CD8-positive, alpha-beta T cell (primary cell): ENCODE measurements at regions of chr4 and their contacts with region 1.

Region 1: GRCh38 chr4:10116580-10117358 is at the start of gene WDR1:
- DNase-seq: peak; percentile 82 to 99 (median 94)
- ATAC-seq: peak; percentile 71
- H3K4me3 ChIP-seq: peak within 1 kb of the TSS; percentile 83 to 91
- H3K4me3 Mint-ChIP-seq: peak within 1 kb of the TSS; percentile 95
- H3K27ac ChIP-seq: peak within 1 kb of the TSS; percentile 96 to 98
- H3K27ac Mint-ChIP-seq: peak within 1 kb of the TSS; percentile 99
- H3K4me1 ChIP-seq: peaks cover 63% of the 10 kb centered on the region
- H3K4me1 Mint-ChIP-seq: peaks cover 74% of the 10 kb centered on the region
- H3K27me3 ChIP-seq: no peaks in the 10 kb centered on the region
- H3K27me3 Mint-ChIP-seq: no peaks in the 10 kb centered on the region
- CTCF ChIP-seq: no peak
- total RNA-seq, gene WDR1: 220 to 224 TPM

Region 2: GRCh38 chr4:9691238-9692065 is 425.3 kb before region 1 on chr4:
- CTCF ChIA-PET with region 1: no interaction called
- POLR2A ChIA-PET with region 1: interaction called, 6 read pairs
- intact Hi-C with region 1: loop called (anchors 1 to 2 kb)
- DNase-seq: peak; percentile 79 to 96 (median 89)
- ATAC-seq: peak; percentile 99
- H3K4me3 ChIP-seq: peak overlapping the region; percentile 72 to 75
- H3K4me3 Mint-ChIP-seq: peak overlapping the region; percentile 88
- H3K27ac ChIP-seq: peak overlapping the region; percentile 55 to 76
- H3K27ac Mint-ChIP-seq: peak overlapping the region; percentile 76
- H3K4me1 ChIP-seq: peaks cover 8% of the 10 kb centered on the region
- H3K4me1 Mint-ChIP-seq: peaks cover 28% of the 10 kb centered on the region
- H3K27me3 ChIP-seq: no peaks in the 10 kb centered on the region
- H3K27me3 Mint-ChIP-seq: no peaks in the 10 kb centered on the region
- CTCF ChIP-seq: no peak

Region 3: DNA sequence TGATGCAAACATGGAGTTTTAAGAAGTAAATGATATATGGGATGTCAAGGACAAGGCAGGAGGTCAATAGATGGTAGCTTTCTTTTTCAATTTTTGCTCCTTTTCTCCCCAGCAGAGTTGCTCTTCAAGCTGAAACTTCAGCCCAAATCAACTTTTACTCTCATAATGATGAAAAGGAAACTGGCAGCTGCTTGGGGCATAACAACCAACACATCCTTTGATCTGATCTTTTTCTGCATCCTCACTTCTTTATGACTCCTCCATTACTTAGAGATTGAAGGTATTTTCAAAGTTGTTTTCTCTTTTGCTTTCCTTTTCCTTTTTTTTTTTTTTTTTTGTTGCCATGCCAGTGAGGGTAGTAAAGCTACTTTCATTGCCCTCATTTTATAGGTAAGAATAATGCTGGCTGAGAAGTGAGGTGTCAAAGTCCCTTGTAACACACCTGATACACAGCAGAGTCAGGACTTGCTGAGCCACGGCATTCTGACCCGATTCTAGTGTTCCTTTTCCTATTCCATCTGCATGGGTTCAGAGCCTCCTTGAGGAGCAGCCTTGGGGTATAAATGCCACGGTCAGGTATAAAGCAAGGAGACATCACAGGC is 122.4 kb before region 1 on chr4:
- CTCF ChIA-PET with region 1: no interaction called
- POLR2A ChIA-PET with region 1: no interaction called
- intact Hi-C with region 1: no loop called
- DNase-seq: peak in 1 of 9 experiments; percentile 22
- ATAC-seq: peak; percentile 42
- H3K4me3 ChIP-seq: no peak overlapping the region
- H3K4me3 Mint-ChIP-seq: no peak overlapping the region
- H3K27ac ChIP-seq: no peak overlapping the region
- H3K27ac Mint-ChIP-seq: peak overlapping the region; percentile 4
- H3K4me1 ChIP-seq: peaks cover 13% of the 10 kb centered on the region
- H3K4me1 Mint-ChIP-seq: peaks cover 9% of the 10 kb centered on the region
- H3K27me3 ChIP-seq: no peaks in the 10 kb centered on the region
- H3K27me3 Mint-ChIP-seq: no peaks in the 10 kb centered on the region
- CTCF ChIP-seq: no peak

Region 4: GRCh38 chr4:10045481-10045880 is 71.3 kb before region 1 on chr4:
- CTCF ChIA-PET with region 1: no interaction called
- POLR2A ChIA-PET with region 1: no interaction called
- intact Hi-C with region 1: no loop called
- DNase-seq: no peak
- ATAC-seq: no peak
- H3K4me3 ChIP-seq: no peak overlapping the region
- H3K4me3 Mint-ChIP-seq: no peak overlapping the region
- H3K27ac ChIP-seq: no peak overlapping the region
- H3K27ac Mint-ChIP-seq: no peak overlapping the region
- H3K4me1 ChIP-seq: peaks cover 5% of the 10 kb centered on the region
- H3K4me1 Mint-ChIP-seq: peaks cover 8% of the 10 kb centered on the region
- H3K27me3 ChIP-seq: no peaks in the 10 kb centered on the region
- H3K27me3 Mint-ChIP-seq: no peaks in the 10 kb centered on the region
- CTCF ChIP-seq: no peak

Region 5: GRCh38 chr4:10079912-10080588 is 36.7 kb before region 1 on chr4:
- CTCF ChIA-PET with region 1: interaction called, 4 read pairs
- POLR2A ChIA-PET with region 1: no interaction called
- intact Hi-C with region 1: loop called (anchors 5 kb)
- DNase-seq: no peak
- ATAC-seq: no peak
- H3K4me3 ChIP-seq: no peak overlapping the region
- H3K4me3 Mint-ChIP-seq: no peak overlapping the region
- H3K27ac ChIP-seq: no peak overlapping the region
- H3K27ac Mint-ChIP-seq: no peak overlapping the region
- H3K4me1 ChIP-seq: no peaks in the 10 kb centered on the region
- H3K4me1 Mint-ChIP-seq: peaks cover 2% of the 10 kb centered on the region
- H3K27me3 ChIP-seq: no peaks in the 10 kb centered on the region
- H3K27me3 Mint-ChIP-seq: no peaks in the 10 kb centered on the region
- CTCF ChIP-seq: no peak

Region 6: GRCh38 chr4:10096201-10096977 is 20.4 kb before region 1 on chr4:
- CTCF ChIA-PET with region 1: interaction called, 3 read pairs
- POLR2A ChIA-PET with region 1: interaction called, 54 read pairs
- intact Hi-C with region 1: loop called (anchors 1 to 2 kb)
- DNase-seq: peak; percentile 46 to 90 (median 83)
- ATAC-seq: peak; percentile 75
- H3K4me3 ChIP-seq: no peak overlapping the region
- H3K4me3 Mint-ChIP-seq: peak overlapping the region; percentile 37
- H3K27ac ChIP-seq: peak overlapping the region; percentile 38 to 70
- H3K27ac Mint-ChIP-seq: peak overlapping the region; percentile 87
- H3K4me1 ChIP-seq: peaks cover 94% of the 10 kb centered on the region
- H3K4me1 Mint-ChIP-seq: peaks cover 94% of the 10 kb centered on the region
- H3K27me3 ChIP-seq: no peaks in the 10 kb centered on the region
- H3K27me3 Mint-ChIP-seq: no peaks in the 10 kb centered on the region
- CTCF ChIP-seq: no peak

Region 7: GRCh38 chr4:10157478-10158332 is 40.9 kb after region 1 on chr4:
- CTCF ChIA-PET with region 1: interaction called, 37 read pairs
- POLR2A ChIA-PET with region 1: interaction called, 6 read pairs
- intact Hi-C with region 1: loop called (anchors 1 to 2 kb)
- DNase-seq: peak in 7 of 9 experiments; percentile 14 to 65 (median 27)
- ATAC-seq: peak; percentile 48
- H3K4me3 ChIP-seq: no peak overlapping the region
- H3K4me3 Mint-ChIP-seq: no peak overlapping the region
- H3K27ac ChIP-seq: no peak overlapping the region
- H3K27ac Mint-ChIP-seq: peak overlapping the region; percentile 55
- H3K4me1 ChIP-seq: peaks cover 43% of the 10 kb centered on the region
- H3K4me1 Mint-ChIP-seq: peaks cover 43% of the 10 kb centered on the region
- H3K27me3 ChIP-seq: no peaks in the 10 kb centered on the region
- H3K27me3 Mint-ChIP-seq: no peaks in the 10 kb centered on the region
- CTCF ChIP-seq: peak; percentile 54

Region 8: GRCh38 chr4:10371869-10372471 is 255.2 kb after region 1 on chr4:
- CTCF ChIA-PET with region 1: no interaction called
- POLR2A ChIA-PET with region 1: no interaction called
- intact Hi-C with region 1: no loop called
- DNase-seq: no peak
- ATAC-seq: no peak
- H3K4me3 ChIP-seq: no peak overlapping the region
- H3K4me3 Mint-ChIP-seq: no peak overlapping the region
- H3K27ac ChIP-seq: no peak overlapping the region
- H3K27ac Mint-ChIP-seq: no peak overlapping the region
- H3K4me1 ChIP-seq: no peaks in the 10 kb centered on the region
- H3K4me1 Mint-ChIP-seq: no peaks in the 10 kb centered on the region
- H3K27me3 ChIP-seq: no peaks in the 10 kb centered on the region
- H3K27me3 Mint-ChIP-seq: no peaks in the 10 kb centered on the region
- CTCF ChIP-seq: no peak